SK-N-SH (cell line): ENCODE measurements at regions of chr15 and their contacts with region 1.

Region 1: GRCh38 chr15:42137431-42138261 is 18.8 kb downstream of the PLA2G4F start:
- DNase-seq: peak; percentile 64
- H3K4me3 ChIP-seq: peak overlapping the region in 1 of 2 experiments; percentile 27; a peak in 1 of 4 replicates
- H3K27ac ChIP-seq: no peak overlapping the region
- H3K4me1 ChIP-seq: no peaks in the 10 kb centered on the region
- H3K27me3 ChIP-seq: no peaks in the 10 kb centered on the region; the same call in 1 of the 2 replicates
- CTCF ChIP-seq: peak; percentile 76
- EP300 ChIP-seq: no peak
- RAD21 ChIP-seq: peak; percentile 78

Region 2: DNA sequence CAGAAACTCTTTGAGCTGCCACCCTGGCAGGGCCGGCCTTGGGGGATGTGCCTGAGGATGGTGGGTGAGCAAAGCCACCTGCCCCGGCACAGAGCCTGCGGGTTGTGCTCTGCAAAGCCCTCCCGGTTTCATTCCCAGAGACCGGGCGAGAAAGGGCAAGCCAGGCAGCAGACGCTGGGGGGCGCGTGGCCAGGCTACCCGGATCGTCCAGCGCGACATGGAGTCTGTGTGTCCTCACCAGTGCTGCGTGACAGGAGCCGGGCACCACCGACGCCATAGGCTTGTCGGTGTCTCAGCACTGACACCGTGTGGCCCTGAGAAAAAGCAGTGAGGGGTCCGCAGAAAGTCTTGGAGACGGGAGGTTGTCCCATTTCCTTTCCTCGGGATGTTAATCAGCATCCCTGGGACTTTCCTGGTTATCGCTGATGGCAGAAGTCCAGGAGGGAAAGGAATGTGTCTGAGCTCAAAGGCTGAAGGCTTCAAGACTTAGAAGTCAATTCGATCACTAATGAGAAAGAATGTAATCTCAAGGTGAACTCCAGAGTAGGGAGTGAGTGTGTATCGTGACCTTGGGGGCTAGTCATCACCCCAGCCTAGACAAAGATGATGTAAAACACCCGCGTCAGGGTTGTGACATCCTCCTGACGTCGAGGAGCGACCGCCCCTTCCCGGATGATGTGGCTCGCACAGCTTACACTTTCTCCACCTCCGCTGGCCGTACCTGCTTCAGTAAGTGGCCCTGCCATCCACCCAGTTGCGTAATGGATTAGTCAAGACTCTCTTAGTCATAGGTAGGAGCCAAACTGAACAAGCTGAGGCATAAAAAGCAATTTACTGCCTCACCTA is 80.5 kb before region 1 on chr15:
- CTCF ChIA-PET with region 1: interaction called, 65 read pairs
- POLR2A ChIA-PET with region 1: no interaction called
- DNase-seq: peak; percentile 90
- H3K4me3 ChIP-seq: peak overlapping the region; percentile 30 to 47
- H3K27ac ChIP-seq: no peak overlapping the region
- H3K4me1 ChIP-seq: peaks cover 0 to 8% of the 10 kb centered on the region in 2 experiments; a peak in 2 of 4 replicates
- H3K27me3 ChIP-seq: peaks cover 11% of the 10 kb centered on the region; the same call in 1 of the 2 replicates
- CTCF ChIP-seq: peak; percentile 63
- EP300 ChIP-seq: no peak
- RAD21 ChIP-seq: peak; percentile 72

Region 3: GRCh38 chr15:42065033-42065432 is 72.6 kb before region 1 on chr15:
- CTCF ChIA-PET with region 1: interaction called, 65 read pairs
- POLR2A ChIA-PET with region 1: no interaction called
- DNase-seq: peak; percentile 56
- H3K4me3 ChIP-seq: no peak overlapping the region
- H3K27ac ChIP-seq: peak overlapping the region in 1 of 2 experiments; percentile 58; a peak in 2 of 4 replicates
- H3K4me1 ChIP-seq: peaks cover 0 to 18% of the 10 kb centered on the region in 2 experiments; a peak in 1 of 4 replicates
- H3K27me3 ChIP-seq: no peaks in the 10 kb centered on the region
- CTCF ChIP-seq: no peak
- EP300 ChIP-seq: no peak
- RAD21 ChIP-seq: no peak

Region 4: DNA sequence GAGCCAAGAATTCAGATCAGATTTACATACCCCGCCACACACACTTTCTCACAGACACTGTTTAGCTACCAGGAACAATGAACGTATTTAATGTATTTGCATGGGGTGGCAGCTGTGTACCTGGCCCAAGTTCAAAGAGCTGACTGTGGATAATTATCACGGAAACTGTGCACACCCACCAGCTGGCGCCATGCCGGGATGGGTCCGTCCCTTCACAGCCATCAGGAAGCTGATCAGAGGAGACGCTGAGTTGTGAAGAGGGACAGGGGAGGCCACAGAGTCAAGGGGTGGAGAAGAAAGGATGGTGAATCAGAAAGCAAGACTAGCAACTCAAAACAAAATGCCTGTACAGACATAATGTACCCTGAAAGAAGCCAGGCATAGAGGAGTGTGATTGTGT is 30.2 kb before region 1 on chr15:
- CTCF ChIA-PET with region 1: interaction called, 12 read pairs
- POLR2A ChIA-PET with region 1: no interaction called
- DNase-seq: no peak
- H3K4me3 ChIP-seq: no peak overlapping the region
- H3K27ac ChIP-seq: no peak overlapping the region
- H3K4me1 ChIP-seq: peaks cover 0 to 4% of the 10 kb centered on the region in 2 experiments; a peak in 1 of 4 replicates
- H3K27me3 ChIP-seq: no peaks in the 10 kb centered on the region; the same call in 1 of the 2 replicates
- CTCF ChIP-seq: no peak
- EP300 ChIP-seq: no peak
- RAD21 ChIP-seq: no peak

Region 5: GRCh38 chr15:42156243-42156922 is 18.7 kb after region 1 on chr15 and contains the start of gene PLA2G4F:
- CTCF ChIA-PET with region 1: interaction called, 29 read pairs
- POLR2A ChIA-PET with region 1: no interaction called
- DNase-seq: no peak
- H3K4me3 ChIP-seq: no peak within 1 kb of the TSS
- H3K27ac ChIP-seq: no peak within 1 kb of the TSS
- H3K4me1 ChIP-seq: peaks cover 9 to 14% of the 10 kb centered on the region in 2 experiments; a peak in 2 of 4 replicates
- H3K27me3 ChIP-seq: no peaks in the 10 kb centered on the region
- CTCF ChIP-seq: no peak
- EP300 ChIP-seq: no peak
- RAD21 ChIP-seq: no peak
- polyA plus RNA-seq, gene PLA2G4F: not detected in 2 replicates

Region 6: GRCh38 chr15:42313463-42313862 is 175.8 kb after region 1 on chr15:
- CTCF ChIA-PET with region 1: no interaction called
- POLR2A ChIA-PET with region 1: no interaction called
- DNase-seq: no peak
- H3K4me3 ChIP-seq: no peak overlapping the region
- H3K27ac ChIP-seq: no peak overlapping the region
- H3K4me1 ChIP-seq: no peaks in the 10 kb centered on the region
- H3K27me3 ChIP-seq: no peaks in the 10 kb centered on the region
- CTCF ChIP-seq: no peak
- EP300 ChIP-seq: no peak
- RAD21 ChIP-seq: no peak